Dendritic cell treated with granulocyte-macrophage colony-stimulating factor and Interleukin-4, amounts not matched to agents 40 ng/mL and 50 ng/mL, for 4 days (primary cell): ENCODE measurements at regions of chr7 and their contacts with region 1.

Region 1: GRCh38 chr7:64902806-64903721 is at the start of gene ZNF273:
- H3K4me3 Mint-ChIP-seq: peak within 1 kb of the TSS; percentile 95
- H3K27ac Mint-ChIP-seq: peak within 1 kb of the TSS; percentile 93
- H3K4me1 Mint-ChIP-seq: peaks cover 33% of the 10 kb centered on the region
- H3K27me3 Mint-ChIP-seq: no peaks in the 10 kb centered on the region

Region 2: DNA sequence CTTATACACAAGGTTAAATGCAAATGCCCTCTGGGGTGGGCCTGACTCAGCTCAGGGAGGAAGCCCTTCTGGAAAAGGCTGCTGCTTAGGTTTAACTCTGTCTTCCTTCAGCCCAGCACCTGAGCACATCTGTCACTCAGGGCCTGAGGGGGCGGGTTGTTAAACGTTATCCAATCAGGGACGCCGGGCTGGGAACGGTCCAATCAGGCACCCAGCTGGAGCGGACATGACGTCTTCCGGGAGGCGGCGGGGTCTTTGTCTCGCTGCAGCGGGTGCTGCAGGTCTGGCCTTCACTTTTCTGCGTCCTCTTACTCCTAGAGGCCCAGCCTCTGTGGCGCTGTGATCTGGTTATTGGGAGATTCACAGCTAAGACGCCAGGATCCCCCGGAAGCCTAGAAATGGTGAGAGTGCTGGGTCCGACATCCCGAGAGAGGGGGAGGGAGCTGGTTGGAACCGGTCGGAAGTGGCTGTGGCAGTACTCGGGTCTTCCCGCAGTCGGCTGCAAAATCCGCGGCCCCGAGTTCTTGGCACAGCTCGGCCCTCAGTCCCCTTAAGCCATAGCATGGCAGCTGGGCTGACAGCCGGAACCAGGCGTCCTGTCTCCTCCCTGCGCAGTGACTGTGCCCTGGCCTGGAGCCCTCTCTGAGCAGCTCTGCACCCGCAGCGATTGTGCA is 108.8 kb before region 1 on chr7 and contains the start of gene ZNF138:
- intact Hi-C with region 1: loop called (anchors 10 kb)
- H3K4me3 Mint-ChIP-seq: peak within 1 kb of the TSS; percentile 98
- H3K27ac Mint-ChIP-seq: peak within 1 kb of the TSS; percentile 96
- H3K4me1 Mint-ChIP-seq: peaks cover 16% of the 10 kb centered on the region
- H3K27me3 Mint-ChIP-seq: no peaks in the 10 kb centered on the region

Region 3: GRCh38 chr7:64839811-64840309 is 63.2 kb before region 1 on chr7:
- intact Hi-C with region 1: no loop called
- H3K4me3 Mint-ChIP-seq: no peak overlapping the region
- H3K27ac Mint-ChIP-seq: no peak overlapping the region
- H3K4me1 Mint-ChIP-seq: no peaks in the 10 kb centered on the region
- H3K27me3 Mint-ChIP-seq: no peaks in the 10 kb centered on the region

Region 4: DNA sequence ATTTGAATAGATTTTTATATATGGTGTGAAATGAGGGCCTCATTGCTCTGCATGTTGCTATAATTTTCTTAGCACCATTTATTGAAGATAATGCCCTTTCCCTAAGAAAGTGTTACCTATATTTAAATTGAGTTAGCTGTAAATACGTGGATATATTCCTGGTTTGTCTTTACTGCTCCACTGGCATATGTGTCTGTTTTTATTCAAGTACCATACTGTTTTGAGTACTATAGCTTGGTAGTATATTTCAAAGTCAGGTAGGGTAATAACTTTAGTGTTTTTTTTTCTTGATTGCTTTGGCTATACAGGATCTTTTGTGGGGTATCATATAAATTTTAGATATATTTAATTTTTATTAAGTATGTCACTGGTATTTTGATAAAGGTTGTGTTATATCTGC is 31.4 kb after region 1 on chr7:
- intact Hi-C with region 1: no loop called
- H3K4me3 Mint-ChIP-seq: no peak overlapping the region
- H3K27ac Mint-ChIP-seq: no peak overlapping the region
- H3K4me1 Mint-ChIP-seq: no peaks in the 10 kb centered on the region
- H3K27me3 Mint-ChIP-seq: no peaks in the 10 kb centered on the region

Region 5: DNA sequence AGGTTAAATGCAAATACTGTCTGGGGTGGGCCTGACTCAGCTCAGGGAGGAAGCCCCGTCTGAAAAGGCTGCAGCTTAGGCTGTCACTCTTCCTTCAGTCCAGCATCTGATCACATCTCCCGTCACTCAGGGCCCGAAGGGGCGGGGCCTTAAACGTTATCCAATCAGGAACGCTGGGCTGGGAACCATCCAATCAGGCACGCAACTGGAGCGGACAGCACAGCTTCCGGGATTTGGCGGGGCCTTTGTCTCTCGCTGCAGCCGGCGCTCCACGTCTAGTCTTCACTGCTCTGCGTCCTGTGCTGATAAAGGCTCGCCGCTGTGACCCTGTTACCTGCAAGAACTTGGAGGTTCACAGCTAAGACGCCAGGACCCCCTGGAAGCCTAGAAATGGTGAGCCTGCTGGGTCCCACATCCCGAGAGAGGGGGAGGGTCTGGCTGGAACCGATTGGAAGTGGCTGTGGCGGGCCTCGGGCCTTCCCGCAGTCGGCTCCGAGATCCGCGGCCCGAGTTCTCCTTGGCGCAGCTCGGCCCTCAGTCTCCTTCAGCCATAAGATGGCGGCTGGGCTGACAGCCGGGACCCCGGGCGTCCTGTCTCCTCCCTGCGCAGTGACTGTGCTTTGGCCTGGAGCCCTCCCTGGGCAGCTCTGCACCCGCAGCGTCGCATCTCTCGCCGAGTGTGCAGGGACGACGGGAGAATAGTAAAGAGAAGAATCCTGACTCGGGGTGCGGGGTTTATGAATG is 470.7 kb after region 1 on chr7 and contains the start of gene ZNF92:
- intact Hi-C with region 1: loop called (anchors 5 kb)
- H3K4me3 Mint-ChIP-seq: peak within 1 kb of the TSS; percentile 91
- H3K27ac Mint-ChIP-seq: peak within 1 kb of the TSS; percentile 95
- H3K4me1 Mint-ChIP-seq: peaks cover 16% of the 10 kb centered on the region
- H3K27me3 Mint-ChIP-seq: no peaks in the 10 kb centered on the region